Cardiac septum (tissue), 1 donor: ENCODE measurements at regions of chr12 and their contacts with region 1.

Region 1: GRCh38 chr12:39986674-39987073 is 119.2 kb downstream of the SLC2A13 start:
- DNase-seq: no peak

Region 2: GRCh38 chr12:39764944-39765560 is 221.6 kb before region 1 on chr12:
- intact Hi-C with region 1: loop called (anchors 5 kb)
- DNase-seq: no peak

Region 3: GRCh38 chr12:40034712-40035111 is 48.0 kb after region 1 on chr12:
- intact Hi-C with region 1: no loop called
- DNase-seq: no peak

Region 4: DNA sequence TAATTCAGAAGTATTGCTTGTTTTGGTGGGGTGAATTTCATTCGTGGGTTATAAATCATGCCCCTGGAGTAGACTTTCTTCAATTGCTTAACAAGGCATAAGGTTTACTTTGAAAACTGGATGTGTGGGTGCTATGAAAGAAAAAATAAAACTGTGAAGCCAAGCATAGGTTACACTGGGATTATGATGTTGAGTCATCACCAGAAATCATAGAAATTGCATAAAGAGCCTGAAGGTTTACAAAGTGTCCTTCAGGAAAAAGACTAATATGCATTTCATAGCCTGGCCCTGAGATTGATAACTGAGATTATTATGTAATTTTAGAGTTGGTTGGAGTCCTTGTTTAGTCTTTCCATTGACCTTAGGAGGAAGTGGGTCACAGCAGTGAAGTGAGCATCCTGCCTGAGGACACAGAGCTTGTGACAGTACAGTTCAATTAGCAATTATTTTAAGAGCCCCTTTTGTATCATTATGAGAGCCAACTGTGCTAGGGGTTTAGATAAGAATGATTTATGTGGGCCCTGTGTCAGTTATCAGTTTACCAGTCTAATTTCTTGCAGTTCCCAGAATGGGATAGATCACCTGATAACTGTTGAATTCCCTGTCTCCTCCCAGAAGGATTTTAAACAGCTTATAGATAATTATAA is 251.7 kb after region 1 on chr12:
- intact Hi-C with region 1: no loop called
- DNase-seq: no peak